ENCODE measurements at regions of chr11 and their contacts with region 1.

Region 1: DNA sequence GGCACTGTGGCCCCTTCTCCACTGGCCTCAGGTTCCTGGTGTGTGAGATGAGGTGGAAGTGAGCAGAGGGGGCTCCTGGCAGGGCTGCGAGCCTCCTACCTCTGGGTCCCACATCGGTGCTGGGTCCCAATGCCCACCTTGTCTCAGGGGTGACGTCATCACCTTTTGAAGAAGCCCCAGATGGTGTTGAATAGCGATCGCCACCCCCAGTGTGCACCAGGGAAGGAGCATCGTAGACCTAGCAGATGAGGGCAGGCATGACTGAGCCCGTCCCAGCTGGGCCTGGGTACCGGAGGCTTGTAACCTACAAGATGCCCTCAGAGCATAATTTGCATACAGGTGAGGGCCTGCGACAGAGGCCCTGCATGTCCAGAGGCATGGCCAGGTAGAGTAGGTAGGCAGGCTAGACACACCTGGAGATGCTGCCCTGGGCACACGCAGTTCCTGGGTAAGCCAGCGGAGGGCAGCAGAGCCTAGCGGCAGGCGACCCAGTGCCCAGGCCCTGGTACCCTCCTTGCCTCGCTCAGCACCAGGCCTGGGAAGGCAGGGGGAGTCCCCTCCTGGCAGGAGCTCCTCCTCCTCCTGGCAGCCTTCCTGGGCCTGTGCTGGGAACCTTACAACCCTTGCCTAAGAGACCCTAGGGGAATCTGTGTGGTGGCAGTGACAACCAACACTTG is 52.5 kb downstream of the TPCN2 start:
- DNase-seq: peak; percentile 87
- H3K4me3 ChIP-seq: no peak overlapping the region
- H3K27ac ChIP-seq: no peak overlapping the region
- H3K4me1 ChIP-seq: peaks cover 16% of the 10 kb centered on the region
- H3K27me3 ChIP-seq: no peaks in the 10 kb centered on the region
- CTCF ChIP-seq: peak; percentile 96 to 100 (median 99)
- POLR2A ChIP-seq: no peak

Region 2: GRCh38 chr11:69670158-69670845 is 569.0 kb after region 1 on chr11:
- intact Hi-C with region 1: loop called (anchors 2 kb)
- DNase-seq: peak; percentile 86
- H3K4me3 ChIP-seq: no peak overlapping the region
- H3K27ac ChIP-seq: peak overlapping the region in 1 of 2 donors; percentile 38
- H3K4me1 ChIP-seq: peaks cover 6% of the 10 kb centered on the region
- H3K27me3 ChIP-seq: no peaks in the 10 kb centered on the region
- CTCF ChIP-seq: peak; percentile 76 to 96 (median 90)
- POLR2A ChIP-seq: no peak

Measured in prostate gland (tissue), 2 donors.